Activated CD4-positive, alpha-beta T cell treated with anti-CD3 and anti-CD28 coated beads, Interleukin-2, amount 10 ng/mL, durations not matched to agents 24 days and 14 days (primary cell): ENCODE measurements at regions of chr6 and their contacts with region 1.

Region 1: DNA sequence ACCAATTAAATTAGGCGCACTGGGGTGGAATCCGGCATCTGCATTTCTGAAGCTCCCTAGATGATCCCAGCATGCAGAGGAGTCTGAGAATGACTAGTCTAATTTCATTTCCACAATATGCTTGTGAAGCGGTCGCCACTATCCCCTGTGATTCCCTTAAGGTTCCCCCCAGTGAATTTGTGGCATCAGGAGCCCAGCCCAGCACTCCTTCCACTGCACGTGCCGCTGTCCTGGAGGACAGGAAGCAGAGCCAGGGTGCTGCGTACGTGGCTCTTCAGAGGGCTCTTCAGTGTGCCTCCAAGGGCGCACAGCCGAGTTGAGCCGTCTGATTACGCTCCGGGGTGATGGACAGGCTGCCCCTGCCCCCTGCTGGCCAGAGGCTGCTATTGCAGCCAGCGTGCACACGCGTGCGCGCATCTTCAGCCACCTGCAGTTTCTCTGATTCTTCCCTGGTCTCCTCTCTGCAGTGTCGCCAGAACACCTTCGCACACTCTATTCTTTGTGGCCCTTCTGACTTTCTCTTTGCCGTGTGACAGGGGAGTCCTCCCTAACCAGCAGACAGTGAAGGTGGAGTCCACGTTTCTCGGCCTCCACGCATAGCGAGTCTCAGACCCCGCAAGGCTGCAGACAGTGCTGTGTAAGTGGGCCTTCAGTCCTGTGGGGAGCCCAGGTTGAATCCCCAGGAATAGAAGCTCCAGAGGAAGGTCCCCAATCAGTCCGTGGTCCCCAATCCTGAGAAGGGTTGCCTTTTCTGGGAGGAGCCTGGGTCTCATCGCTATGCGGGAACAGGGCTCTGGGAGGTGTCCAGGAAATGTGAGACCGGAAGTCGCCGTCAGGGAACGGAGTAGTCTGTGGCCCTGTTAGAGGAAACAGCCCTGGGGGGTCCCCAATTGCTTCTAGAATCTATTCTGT is 16.5 kb upstream of the NCR2 start:
- DNase-seq: peak; percentile 95
- H3K4me3 Mint-ChIP-seq: peak overlapping the region; percentile 68
- H3K27ac Mint-ChIP-seq: peak overlapping the region; percentile 72
- H3K4me1 Mint-ChIP-seq: peaks cover 18% of the 10 kb centered on the region
- H3K27me3 Mint-ChIP-seq: peaks cover 29% of the 10 kb centered on the region

Region 2: GRCh38 chr6:41051873-41052272 is 267.0 kb before region 1 on chr6:
- intact Hi-C with region 1: no loop called
- DNase-seq: peak; percentile 64
- H3K4me3 Mint-ChIP-seq: peak overlapping the region; percentile 6
- H3K27ac Mint-ChIP-seq: peak overlapping the region; percentile 73
- H3K4me1 Mint-ChIP-seq: peaks cover 15% of the 10 kb centered on the region
- H3K27me3 Mint-ChIP-seq: no peaks in the 10 kb centered on the region

Region 3: GRCh38 chr6:41072676-41073623 is 246.0 kb before region 1 on chr6 and contains the start of gene NFYA:
- intact Hi-C with region 1: loop called (anchors 2 kb)
- DNase-seq: peak; percentile 100
- H3K4me3 Mint-ChIP-seq: peak within 1 kb of the TSS; percentile 97
- H3K27ac Mint-ChIP-seq: peak within 1 kb of the TSS; percentile 100
- H3K4me1 Mint-ChIP-seq: peaks cover 59% of the 10 kb centered on the region
- H3K27me3 Mint-ChIP-seq: peaks cover 4% of the 10 kb centered on the region
- total RNA-seq, gene NFYA: 31.2 TPM in 2 replicates

Region 4: DNA sequence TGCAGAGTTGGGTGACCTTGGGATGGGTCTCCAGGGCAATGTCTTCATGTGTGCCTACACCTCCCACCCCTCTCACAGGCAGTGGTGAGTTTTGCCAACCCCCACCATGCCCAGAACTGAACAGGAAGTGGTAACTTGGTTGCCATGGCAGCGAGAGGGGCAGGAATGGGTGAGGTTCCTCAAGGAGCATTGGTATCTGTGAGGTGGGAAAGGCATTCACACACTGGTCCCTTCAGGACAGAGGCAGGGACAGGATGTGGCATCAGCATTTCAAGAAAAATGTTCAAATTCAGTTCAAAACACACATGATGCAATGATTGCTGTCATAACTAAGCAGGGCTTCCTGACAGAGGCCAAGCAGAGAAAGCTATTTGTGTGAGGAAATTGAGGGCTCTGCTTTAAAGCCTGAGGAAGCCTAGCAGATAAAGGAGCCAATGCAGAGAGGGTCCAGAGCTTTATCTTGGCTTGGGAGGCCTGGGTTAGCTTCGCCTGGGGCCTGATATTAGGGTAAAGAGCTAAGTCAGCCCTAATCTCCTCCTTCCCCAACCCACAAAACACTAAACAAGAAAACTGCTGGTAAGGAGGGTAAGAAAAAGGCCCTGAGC is 118.5 kb before region 1 on chr6:
- intact Hi-C with region 1: loop called (anchors 5 kb)
- DNase-seq: peak; percentile 92
- H3K4me3 Mint-ChIP-seq: peak overlapping the region; percentile 80
- H3K27ac Mint-ChIP-seq: peak overlapping the region; percentile 94
- H3K4me1 Mint-ChIP-seq: peaks cover 51% of the 10 kb centered on the region
- H3K27me3 Mint-ChIP-seq: peaks cover 2% of the 10 kb centered on the region

Region 5: GRCh38 chr6:41298785-41299502 is 20.0 kb before region 1 on chr6:
- intact Hi-C with region 1: loop called (anchors 2 kb)
- DNase-seq: peak; percentile 74
- H3K4me3 Mint-ChIP-seq: peak overlapping the region; percentile 53
- H3K27ac Mint-ChIP-seq: peak overlapping the region; percentile 66
- H3K4me1 Mint-ChIP-seq: peaks cover 37% of the 10 kb centered on the region
- H3K27me3 Mint-ChIP-seq: peaks cover 14% of the 10 kb centered on the region

Region 6: DNA sequence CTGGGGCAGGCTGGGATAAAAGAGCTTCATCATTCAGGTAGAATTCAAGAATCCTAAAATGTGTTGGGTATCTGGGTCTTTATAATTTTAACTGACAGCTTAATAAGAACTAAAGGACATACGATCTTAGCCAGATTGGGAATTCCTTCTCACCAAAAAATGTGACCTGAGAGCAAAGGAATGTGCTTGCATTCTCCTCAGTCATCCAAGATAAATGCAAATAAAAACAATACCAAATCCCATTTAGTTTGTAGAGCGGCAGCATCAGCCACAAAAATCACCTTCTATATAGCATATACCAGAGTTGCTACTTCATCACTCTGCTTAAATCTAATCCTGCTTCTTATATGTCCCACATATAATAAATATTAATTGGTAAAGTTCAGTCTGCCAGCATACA is 559.3 kb after region 1 on chr6:
- intact Hi-C with region 1: no loop called
- DNase-seq: no peak
- H3K4me3 Mint-ChIP-seq: no peak overlapping the region
- H3K27ac Mint-ChIP-seq: no peak overlapping the region
- H3K4me1 Mint-ChIP-seq: peaks cover 2% of the 10 kb centered on the region
- H3K27me3 Mint-ChIP-seq: no peaks in the 10 kb centered on the region